Spleen (tissue), 13 donors: ENCODE measurements at regions of chr7 and their contacts with region 1.

Region 1: GRCh38 chr7:12067141-12067831 is 143.8 kb upstream of the TMEM106B start:
- DNase-seq: no peak
- H3K4me3 ChIP-seq: no peak overlapping the region
- H3K27ac ChIP-seq: peak overlapping the region in 4 of 8 donors; percentile 28 to 77 (median 68)
- H3K4me1 ChIP-seq: no peaks in the 10 kb centered on the region
- H3K27me3 ChIP-seq: no peaks in the 10 kb centered on the region
- CTCF ChIP-seq: peak in 10 of 11 experiments; percentile 37 to 71 (median 64)
- POLR2A ChIP-seq: no peak

Region 2: GRCh38 chr7:12102126-12102525 is 34.8 kb after region 1 on chr7:
- intact Hi-C with region 1: no loop called
- DNase-seq: no peak
- H3K4me3 ChIP-seq: no peak overlapping the region
- H3K27ac ChIP-seq: no peak overlapping the region
- H3K4me1 ChIP-seq: no peaks in the 10 kb centered on the region
- H3K27me3 ChIP-seq: no peaks in the 10 kb centered on the region
- CTCF ChIP-seq: no peak
- POLR2A ChIP-seq: no peak

Region 3: DNA sequence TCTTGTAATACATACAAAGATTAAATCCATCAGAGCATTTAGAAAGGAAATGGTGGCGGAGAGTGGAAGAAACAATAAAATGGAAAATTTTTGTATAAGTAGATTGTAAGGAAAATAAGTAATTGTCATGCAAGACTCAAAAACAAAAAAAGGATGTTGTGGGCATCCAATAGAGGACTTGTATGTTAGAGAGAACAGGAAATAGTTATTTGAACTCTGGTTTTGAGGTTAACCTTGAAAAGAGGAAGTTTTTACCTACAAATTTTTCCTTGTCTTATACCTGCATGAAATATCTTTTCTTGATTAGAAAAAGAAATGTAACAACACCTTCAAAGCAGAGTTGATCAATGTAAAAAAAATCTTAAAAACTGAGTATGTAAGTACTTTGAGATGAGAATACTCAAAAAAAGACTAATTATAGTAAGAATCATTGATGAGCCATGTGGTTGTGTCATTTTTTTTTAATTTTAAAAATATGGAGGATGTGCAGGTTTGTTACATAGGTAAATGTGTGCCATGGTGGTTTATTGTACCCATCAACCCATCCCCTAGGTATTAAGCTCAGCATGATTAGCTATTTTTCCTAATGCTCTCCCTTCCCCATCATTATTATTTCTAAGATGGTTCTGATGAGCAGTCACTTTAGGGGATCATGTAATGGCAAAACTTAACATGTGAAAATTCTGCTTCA is 155.7 kb after region 1 on chr7:
- intact Hi-C with region 1: no loop called
- DNase-seq: no peak
- H3K4me3 ChIP-seq: no peak overlapping the region
- H3K27ac ChIP-seq: peak overlapping the region in 5 of 8 donors; percentile 0 to 63 (median 55)
- H3K4me1 ChIP-seq: peaks cover 0 to 27% (median 12%) of the 10 kb centered on the region in 6 donors
- H3K27me3 ChIP-seq: no peaks in the 10 kb centered on the region
- CTCF ChIP-seq: no peak
- POLR2A ChIP-seq: no peak

Region 4: DNA sequence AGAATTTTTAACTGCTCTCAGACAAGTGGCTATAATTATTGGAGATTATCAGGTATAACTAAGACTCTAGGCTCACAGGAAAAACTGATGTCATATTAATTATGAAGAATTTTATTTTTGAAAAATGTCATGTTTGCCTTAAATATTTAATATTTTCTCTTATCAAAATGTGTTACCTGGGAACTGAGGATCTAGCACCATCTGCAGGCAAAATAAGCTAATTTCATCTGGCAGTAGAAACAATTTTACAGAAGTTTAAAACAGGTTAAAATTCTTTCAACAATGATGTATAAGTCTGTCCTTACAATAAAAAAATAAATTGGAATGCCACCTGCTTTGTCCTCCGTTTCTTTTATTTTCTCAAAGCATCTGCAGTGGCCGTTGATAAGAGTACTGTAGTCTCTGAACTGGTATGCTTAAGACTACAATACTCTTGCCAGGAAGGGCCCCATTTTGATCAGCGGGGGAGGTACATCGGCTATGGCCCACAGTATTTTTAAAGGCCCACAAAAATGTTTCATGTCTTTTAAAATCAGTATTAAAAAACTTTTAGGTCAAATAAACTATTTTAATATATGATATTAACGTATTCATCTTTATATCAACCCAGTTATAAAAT is 255.1 kb after region 1 on chr7:
- intact Hi-C with region 1: loop called (anchors 5 kb)
- DNase-seq: no peak
- H3K4me3 ChIP-seq: no peak overlapping the region
- H3K27ac ChIP-seq: no peak overlapping the region
- H3K4me1 ChIP-seq: no peaks in the 10 kb centered on the region
- H3K27me3 ChIP-seq: no peaks in the 10 kb centered on the region
- CTCF ChIP-seq: peak; percentile 30 to 66 (median 60)
- POLR2A ChIP-seq: no peak

Region 5: GRCh38 chr7:12337095-12337494 is 269.8 kb after region 1 on chr7:
- intact Hi-C with region 1: no loop called
- DNase-seq: no peak
- H3K4me3 ChIP-seq: no peak overlapping the region
- H3K27ac ChIP-seq: no peak overlapping the region
- H3K4me1 ChIP-seq: no peaks in the 10 kb centered on the region
- H3K27me3 ChIP-seq: no peaks in the 10 kb centered on the region
- CTCF ChIP-seq: no peak
- POLR2A ChIP-seq: no peak